ENCODE measurements at regions of chr5 and their contacts with region 1.

Region 1: GRCh38 chr5:66306105-66306843 is 162.2 kb downstream of the SREK1 start:
- DNase-seq: peak; percentile 79
- H3K4me3 Mint-ChIP-seq: no peak overlapping the region
- H3K27ac Mint-ChIP-seq: no peak overlapping the region
- H3K4me1 Mint-ChIP-seq: no peaks in the 10 kb centered on the region
- H3K27me3 Mint-ChIP-seq: peaks cover 45% of the 10 kb centered on the region
- CTCF ChIP-seq: peak; percentile 87

Region 2: GRCh38 chr5:65451436-65451835 is 854.8 kb before region 1 on chr5:
- CTCF ChIA-PET with region 1: no interaction called
- POLR2A ChIA-PET with region 1: no interaction called
- intact Hi-C with region 1: no loop called
- DNase-seq: no peak
- H3K4me3 Mint-ChIP-seq: no peak overlapping the region
- H3K27ac Mint-ChIP-seq: no peak overlapping the region
- H3K4me1 Mint-ChIP-seq: no peaks in the 10 kb centered on the region
- H3K27me3 Mint-ChIP-seq: no peaks in the 10 kb centered on the region
- CTCF ChIP-seq: no peak

Region 3: DNA sequence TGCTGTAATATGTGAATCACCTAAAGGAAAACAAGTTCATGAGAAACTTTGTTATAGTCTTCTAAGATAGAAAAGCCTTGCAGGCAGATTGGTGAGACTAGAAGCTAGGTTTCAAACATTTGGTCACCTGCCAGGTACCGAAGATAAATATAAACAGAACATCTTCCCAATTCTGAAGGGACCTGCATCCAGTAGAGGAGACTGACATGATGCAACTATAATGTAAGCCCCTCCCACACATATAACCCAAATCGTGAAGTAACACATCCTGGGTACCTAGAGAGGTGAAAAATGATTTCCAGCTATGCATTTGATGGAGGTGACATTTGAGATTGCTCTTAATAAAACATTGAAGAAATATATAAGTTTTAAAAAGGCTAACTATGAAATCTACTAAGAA is 651.6 kb before region 1 on chr5:
- CTCF ChIA-PET with region 1: no interaction called
- POLR2A ChIA-PET with region 1: no interaction called
- intact Hi-C with region 1: no loop called
- DNase-seq: no peak
- H3K4me3 Mint-ChIP-seq: no peak overlapping the region
- H3K27ac Mint-ChIP-seq: no peak overlapping the region
- H3K4me1 Mint-ChIP-seq: no peaks in the 10 kb centered on the region
- H3K27me3 Mint-ChIP-seq: no peaks in the 10 kb centered on the region
- CTCF ChIP-seq: no peak

Region 4: DNA sequence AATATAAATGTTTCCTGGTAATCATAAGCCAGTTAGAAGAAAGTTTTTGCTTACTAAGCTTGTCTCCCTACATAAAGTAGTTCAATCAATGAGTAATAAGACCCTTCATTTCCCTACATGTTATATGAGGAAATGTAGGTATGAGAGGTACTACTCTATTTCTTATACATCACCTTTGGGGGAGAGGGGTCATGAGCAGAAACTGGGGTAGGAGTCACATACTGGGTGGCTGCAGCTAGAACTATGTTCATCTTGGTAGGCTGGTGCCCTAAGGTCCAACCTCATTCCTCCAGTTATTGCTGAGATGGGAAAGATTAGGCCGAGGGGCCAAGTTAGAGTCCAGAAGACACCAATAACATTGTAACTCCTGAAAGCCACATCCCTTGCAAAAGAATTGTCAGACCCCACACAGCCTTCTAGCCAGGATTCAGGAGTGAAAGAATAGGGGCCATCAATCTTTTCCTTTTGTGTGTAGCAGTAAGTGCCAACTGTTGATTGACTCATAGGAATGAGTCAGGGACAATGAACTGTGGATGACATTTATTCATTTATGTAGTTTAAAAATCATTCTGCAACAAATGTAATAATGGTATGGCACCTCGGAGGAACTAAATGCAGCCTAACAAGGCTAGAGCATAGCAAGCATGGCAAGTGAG is 183.8 kb before region 1 on chr5:
- CTCF ChIA-PET with region 1: no interaction called
- POLR2A ChIA-PET with region 1: no interaction called
- intact Hi-C with region 1: no loop called
- DNase-seq: peak; percentile 42
- H3K4me3 Mint-ChIP-seq: no peak overlapping the region
- H3K27ac Mint-ChIP-seq: no peak overlapping the region
- H3K4me1 Mint-ChIP-seq: peaks cover 6% of the 10 kb centered on the region
- H3K27me3 Mint-ChIP-seq: no peaks in the 10 kb centered on the region
- CTCF ChIP-seq: no peak

Region 5: DNA sequence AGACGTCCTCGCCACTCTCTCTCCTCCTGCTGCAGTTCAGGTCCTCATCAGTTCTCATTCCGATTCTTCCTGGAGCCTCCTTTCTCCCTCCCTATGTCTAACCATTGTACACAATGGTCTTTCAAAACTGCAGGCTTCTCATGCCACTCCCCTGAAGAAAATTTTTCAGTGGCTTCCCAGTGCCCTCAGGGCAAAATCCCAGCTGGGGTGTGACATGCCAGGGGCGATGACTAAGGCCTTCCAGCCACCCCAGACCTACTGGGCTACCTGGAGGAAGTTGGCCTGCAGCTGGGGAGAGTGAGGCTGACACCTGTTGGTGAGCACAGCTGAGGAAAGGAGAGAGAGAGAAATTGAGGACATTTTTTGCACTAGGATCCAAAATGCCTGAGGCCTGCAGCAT is 96.9 kb before region 1 on chr5:
- CTCF ChIA-PET with region 1: no interaction called
- POLR2A ChIA-PET with region 1: no interaction called
- intact Hi-C with region 1: no loop called
- DNase-seq: peak; percentile 82
- H3K4me3 Mint-ChIP-seq: peak overlapping the region; percentile 24
- H3K27ac Mint-ChIP-seq: peak overlapping the region; percentile 74
- H3K4me1 Mint-ChIP-seq: peaks cover 23% of the 10 kb centered on the region
- H3K27me3 Mint-ChIP-seq: no peaks in the 10 kb centered on the region
- CTCF ChIP-seq: peak; percentile 12

Region 6: DNA sequence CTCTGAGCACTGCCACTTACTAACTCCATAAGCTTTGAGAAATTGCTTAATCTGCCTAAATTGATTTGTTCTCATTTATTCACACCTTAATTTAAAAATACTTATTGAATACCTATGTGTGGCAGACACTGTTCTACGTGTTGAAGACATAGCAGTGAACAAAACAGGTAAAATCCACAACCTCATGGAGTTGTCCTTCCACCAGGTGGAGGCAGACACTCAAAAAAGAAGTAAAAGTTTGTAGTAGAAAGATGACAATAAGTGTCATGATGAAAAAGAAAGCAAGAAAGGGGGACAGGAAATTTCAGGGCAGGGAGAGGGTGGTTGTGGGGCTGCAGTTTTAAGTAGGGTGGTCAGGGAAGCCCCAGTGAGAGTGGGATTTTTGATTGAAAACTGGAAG is 67.2 kb before region 1 on chr5:
- CTCF ChIA-PET with region 1: interaction called, 9 read pairs
- POLR2A ChIA-PET with region 1: no interaction called
- intact Hi-C with region 1: loop called (anchors 1 kb)
- DNase-seq: peak; percentile 35
- H3K4me3 Mint-ChIP-seq: no peak overlapping the region
- H3K27ac Mint-ChIP-seq: no peak overlapping the region
- H3K4me1 Mint-ChIP-seq: peaks cover 6% of the 10 kb centered on the region
- H3K27me3 Mint-ChIP-seq: peaks cover 27% of the 10 kb centered on the region
- CTCF ChIP-seq: peak; percentile 36

Region 7: DNA sequence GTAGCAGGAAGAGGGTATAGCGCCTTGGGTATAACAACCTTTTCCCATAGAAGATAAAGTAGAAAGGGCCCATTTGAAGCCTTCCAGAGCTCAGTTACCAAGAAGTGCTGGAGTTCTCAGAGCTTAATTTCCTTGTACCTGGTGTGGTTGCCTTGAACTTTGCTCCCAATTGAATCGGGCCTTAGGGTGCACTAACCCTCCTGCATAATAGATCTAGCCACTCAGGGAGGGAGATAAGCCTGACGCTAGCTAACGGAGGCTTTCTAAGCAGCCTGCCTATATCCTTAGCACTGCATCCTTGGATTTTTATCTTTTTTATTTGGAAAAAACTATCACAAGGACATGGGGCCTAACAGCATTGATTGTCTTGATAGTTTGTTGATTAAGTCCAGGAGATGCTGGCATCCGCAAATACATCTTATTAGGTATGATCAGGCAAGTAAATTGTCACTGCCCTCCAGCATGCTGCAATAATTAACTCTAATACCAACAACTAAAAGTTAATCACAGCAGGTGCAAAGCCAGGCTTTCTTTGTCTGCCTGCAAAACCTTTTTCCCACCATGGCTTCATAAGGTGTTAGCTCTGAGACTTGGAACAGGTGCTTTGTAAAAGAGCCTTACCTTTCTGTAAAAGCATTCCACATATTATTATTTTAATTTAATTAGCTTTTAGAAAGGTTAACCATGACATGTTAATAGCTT is 37.2 kb after region 1 on chr5:
- CTCF ChIA-PET with region 1: interaction called, 14 read pairs
- POLR2A ChIA-PET with region 1: no interaction called
- intact Hi-C with region 1: no loop called
- DNase-seq: no peak
- H3K4me3 Mint-ChIP-seq: no peak overlapping the region
- H3K27ac Mint-ChIP-seq: no peak overlapping the region
- H3K4me1 Mint-ChIP-seq: no peaks in the 10 kb centered on the region
- H3K27me3 Mint-ChIP-seq: peaks cover 61% of the 10 kb centered on the region
- CTCF ChIP-seq: no peak

Region 8: GRCh38 chr5:66727630-66728029 is 421.4 kb after region 1 on chr5:
- CTCF ChIA-PET with region 1: interaction called, 24 read pairs
- POLR2A ChIA-PET with region 1: interaction called, 4 read pairs
- intact Hi-C with region 1: no loop called
- DNase-seq: no peak
- H3K4me3 Mint-ChIP-seq: no peak overlapping the region
- H3K27ac Mint-ChIP-seq: no peak overlapping the region
- H3K4me1 Mint-ChIP-seq: no peaks in the 10 kb centered on the region
- H3K27me3 Mint-ChIP-seq: peaks cover 46% of the 10 kb centered on the region
- CTCF ChIP-seq: no peak

Region 9: GRCh38 chr5:66764982-66765381 is 458.7 kb after region 1 on chr5:
- CTCF ChIA-PET with region 1: interaction called, 167 read pairs
- POLR2A ChIA-PET with region 1: interaction called, 4 read pairs
- intact Hi-C with region 1: no loop called
- DNase-seq: no peak
- H3K4me3 Mint-ChIP-seq: no peak overlapping the region
- H3K27ac Mint-ChIP-seq: no peak overlapping the region
- H3K4me1 Mint-ChIP-seq: no peaks in the 10 kb centered on the region
- H3K27me3 Mint-ChIP-seq: peaks cover 20% of the 10 kb centered on the region
- CTCF ChIP-seq: no peak

Region 10: DNA sequence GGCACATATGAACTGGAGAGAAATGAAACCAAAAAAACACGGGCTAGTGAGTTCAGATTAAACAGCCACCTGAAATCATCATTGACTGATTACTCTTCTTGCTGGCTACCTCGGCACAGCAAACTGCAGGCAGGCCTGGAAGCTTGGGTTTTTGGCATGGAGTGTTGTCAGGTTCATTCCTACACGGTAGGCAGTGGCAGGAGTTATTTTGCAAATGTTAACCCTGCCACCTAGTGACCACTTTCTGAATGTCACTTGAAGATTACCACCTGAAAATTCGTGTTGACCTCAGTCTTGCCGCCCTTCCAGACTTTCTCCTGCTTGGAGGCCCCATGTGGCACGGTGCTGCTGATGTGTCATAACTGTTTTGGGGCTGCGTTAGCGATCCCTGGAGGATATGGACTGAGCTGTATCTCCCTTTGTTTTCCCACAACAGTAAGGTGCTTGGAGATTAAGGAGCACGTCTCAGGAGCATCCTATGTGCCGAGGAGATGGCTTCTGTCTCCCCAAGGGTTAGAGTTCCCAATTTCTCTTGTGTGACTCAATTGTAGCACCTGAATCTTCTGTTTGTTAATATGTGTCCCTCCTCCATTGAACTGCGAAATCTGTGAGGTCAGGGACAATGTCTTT is 903.0 kb after region 1 on chr5:
- CTCF ChIA-PET with region 1: no interaction called
- POLR2A ChIA-PET with region 1: no interaction called
- intact Hi-C with region 1: loop called (anchors 5 kb)
- DNase-seq: peak; percentile 88
- H3K4me3 Mint-ChIP-seq: no peak overlapping the region
- H3K27ac Mint-ChIP-seq: no peak overlapping the region
- H3K4me1 Mint-ChIP-seq: peaks cover 48% of the 10 kb centered on the region
- H3K27me3 Mint-ChIP-seq: no peaks in the 10 kb centered on the region
- CTCF ChIP-seq: peak; percentile 69